ENCODE measurements at regions of chr6 and their contacts with region 1.

Region 1: GRCh38 chr6:134640975-134641429 is 308.9 kb downstream of the ALDH8A1 start:
- DNase-seq: peak; percentile 73 to 78 (median 75)
- H3K4me3 ChIP-seq: no peak overlapping the region
- H3K4me3 Mint-ChIP-seq: no peak overlapping the region
- H3K27ac ChIP-seq: no peak overlapping the region
- H3K27ac Mint-ChIP-seq: no peak overlapping the region
- H3K4me1 ChIP-seq: peaks cover 7% of the 10 kb centered on the region
- H3K4me1 Mint-ChIP-seq: peaks cover 10 to 20% (median 15%) of the 10 kb centered on the region in 4 donors
- H3K27me3 ChIP-seq: no peaks in the 10 kb centered on the region
- H3K27me3 Mint-ChIP-seq: no peaks in the 10 kb centered on the region

Region 2: DNA sequence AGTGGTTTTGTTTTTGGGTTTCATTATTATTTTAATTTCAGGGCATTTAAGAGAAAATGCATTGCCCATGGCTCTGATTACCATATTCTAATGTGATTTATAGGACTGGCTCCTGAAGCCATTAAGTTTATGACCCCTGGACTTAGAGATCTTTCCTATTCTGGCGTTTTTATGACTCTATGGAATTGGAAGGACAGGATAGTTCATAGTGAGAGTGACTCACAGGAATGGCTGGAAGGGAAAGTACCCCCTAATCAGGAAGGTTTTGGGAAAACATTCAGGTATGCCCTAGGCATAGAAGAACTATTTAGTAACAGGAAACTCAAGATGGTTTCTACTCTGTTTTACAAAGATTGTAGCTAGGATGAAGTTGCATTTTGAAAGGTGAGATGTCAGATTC is 480.0 kb before region 1 on chr6:
- CTCF ChIA-PET with region 1: interaction called, 27 read pairs
- POLR2A ChIA-PET with region 1: no interaction called
- intact Hi-C with region 1: no loop called
- DNase-seq: no peak
- H3K4me3 ChIP-seq: no peak overlapping the region
- H3K4me3 Mint-ChIP-seq: no peak overlapping the region
- H3K27ac ChIP-seq: no peak overlapping the region
- H3K27ac Mint-ChIP-seq: no peak overlapping the region
- H3K4me1 ChIP-seq: no peaks in the 10 kb centered on the region
- H3K4me1 Mint-ChIP-seq: no peaks in the 10 kb centered on the region
- H3K27me3 ChIP-seq: no peaks in the 10 kb centered on the region
- H3K27me3 Mint-ChIP-seq: no peaks in the 10 kb centered on the region

Region 3: DNA sequence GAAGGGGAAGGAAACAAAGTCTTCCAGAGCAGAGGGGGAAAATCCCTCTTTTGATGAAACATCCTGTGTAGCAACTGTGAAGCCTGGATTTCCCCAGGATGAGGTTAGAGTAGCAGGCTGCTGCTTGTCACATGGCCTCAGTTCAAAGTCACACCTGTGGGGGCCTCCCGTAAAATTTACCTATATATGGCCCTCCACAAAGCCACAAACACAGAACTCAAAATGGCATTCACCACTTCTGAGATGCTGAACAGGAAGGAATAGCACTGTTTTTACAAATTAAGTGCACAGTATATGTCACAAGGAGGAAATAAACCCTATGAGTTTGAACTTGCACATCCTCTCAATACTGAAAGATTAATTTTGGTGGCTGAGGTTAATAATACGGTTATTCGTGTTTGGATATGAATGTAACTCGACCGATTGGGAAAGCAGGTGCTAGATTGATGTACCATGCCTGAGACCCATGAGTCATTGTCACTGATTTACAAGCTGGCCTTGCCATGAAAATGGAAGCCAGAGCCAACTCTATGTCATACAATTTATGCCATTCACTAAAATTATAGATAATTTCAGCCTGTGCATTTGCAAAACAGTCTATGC is 393.7 kb before region 1 on chr6:
- CTCF ChIA-PET with region 1: interaction called, 6 read pairs
- POLR2A ChIA-PET with region 1: no interaction called
- intact Hi-C with region 1: loop called (anchors 1 kb)
- DNase-seq: peak; percentile 85 to 95 (median 92)
- H3K4me3 ChIP-seq: peak overlapping the region in 1 of 2 donors; percentile 5
- H3K4me3 Mint-ChIP-seq: peak overlapping the region; percentile 60 to 82 (median 76)
- H3K27ac ChIP-seq: peak overlapping the region; percentile 60
- H3K27ac Mint-ChIP-seq: peak overlapping the region; percentile 90 to 99 (median 98)
- H3K4me1 ChIP-seq: peaks cover 63% of the 10 kb centered on the region
- H3K4me1 Mint-ChIP-seq: peaks cover 43 to 65% (median 54%) of the 10 kb centered on the region in 4 donors
- H3K27me3 ChIP-seq: no peaks in the 10 kb centered on the region
- H3K27me3 Mint-ChIP-seq: no peaks in the 10 kb centered on the region

Region 4: GRCh38 chr6:134619789-134620188 is 21.2 kb before region 1 on chr6:
- CTCF ChIA-PET with region 1: interaction called, 26 read pairs
- POLR2A ChIA-PET with region 1: interaction called, 4 read pairs
- intact Hi-C with region 1: no loop called
- DNase-seq: no peak
- H3K4me3 ChIP-seq: no peak overlapping the region
- H3K4me3 Mint-ChIP-seq: no peak overlapping the region
- H3K27ac ChIP-seq: no peak overlapping the region
- H3K27ac Mint-ChIP-seq: peak overlapping the region in 1 of 7 donors; percentile 19
- H3K4me1 ChIP-seq: no peaks in the 10 kb centered on the region
- H3K4me1 Mint-ChIP-seq: peaks cover 3 to 7% (median 5%) of the 10 kb centered on the region in 4 donors
- H3K27me3 ChIP-seq: no peaks in the 10 kb centered on the region
- H3K27me3 Mint-ChIP-seq: peaks cover 0 to 3% of the 10 kb centered on the region in 2 donors

Region 5: DNA sequence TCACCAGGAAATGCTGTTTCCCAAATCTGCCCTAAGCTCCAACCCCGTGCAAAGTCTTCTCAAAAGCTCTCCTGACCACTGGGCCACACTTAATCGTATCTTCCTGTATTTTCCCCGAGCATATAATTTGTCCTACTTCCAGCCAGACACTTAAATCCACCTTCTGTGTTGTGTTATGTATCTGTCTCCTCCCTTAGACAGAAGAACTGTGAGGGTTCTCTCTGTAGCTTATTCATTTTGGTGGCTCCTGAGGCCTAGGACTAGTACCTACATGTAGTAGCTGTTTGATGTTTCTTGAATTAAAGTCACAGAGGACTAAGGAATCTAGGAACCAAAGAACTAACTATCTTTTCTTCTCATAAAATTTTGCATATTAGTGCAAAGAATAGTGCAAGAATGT is 16.3 kb after region 1 on chr6:
- CTCF ChIA-PET with region 1: interaction called, 10 read pairs
- POLR2A ChIA-PET with region 1: no interaction called
- intact Hi-C with region 1: no loop called
- DNase-seq: no peak
- H3K4me3 ChIP-seq: no peak overlapping the region
- H3K4me3 Mint-ChIP-seq: no peak overlapping the region
- H3K27ac ChIP-seq: no peak overlapping the region
- H3K27ac Mint-ChIP-seq: no peak overlapping the region
- H3K4me1 ChIP-seq: no peaks in the 10 kb centered on the region
- H3K4me1 Mint-ChIP-seq: no peaks in the 10 kb centered on the region
- H3K27me3 ChIP-seq: no peaks in the 10 kb centered on the region
- H3K27me3 Mint-ChIP-seq: peaks cover 0 to 5% of the 10 kb centered on the region in 2 donors

Region 6: GRCh38 chr6:134882426-134883038 is 241.5 kb after region 1 on chr6:
- CTCF ChIA-PET with region 1: interaction called, 8 read pairs
- POLR2A ChIA-PET with region 1: no interaction called
- intact Hi-C with region 1: loop called (anchors 1 kb)
- DNase-seq: peak; percentile 22 to 49 (median 45)
- H3K4me3 ChIP-seq: no peak overlapping the region
- H3K4me3 Mint-ChIP-seq: no peak overlapping the region
- H3K27ac ChIP-seq: no peak overlapping the region
- H3K27ac Mint-ChIP-seq: no peak overlapping the region
- H3K4me1 ChIP-seq: no peaks in the 10 kb centered on the region
- H3K4me1 Mint-ChIP-seq: no peaks in the 10 kb centered on the region
- H3K27me3 ChIP-seq: no peaks in the 10 kb centered on the region
- H3K27me3 Mint-ChIP-seq: peaks cover 14 to 18% of the 10 kb centered on the region in 2 donors

Region 7: DNA sequence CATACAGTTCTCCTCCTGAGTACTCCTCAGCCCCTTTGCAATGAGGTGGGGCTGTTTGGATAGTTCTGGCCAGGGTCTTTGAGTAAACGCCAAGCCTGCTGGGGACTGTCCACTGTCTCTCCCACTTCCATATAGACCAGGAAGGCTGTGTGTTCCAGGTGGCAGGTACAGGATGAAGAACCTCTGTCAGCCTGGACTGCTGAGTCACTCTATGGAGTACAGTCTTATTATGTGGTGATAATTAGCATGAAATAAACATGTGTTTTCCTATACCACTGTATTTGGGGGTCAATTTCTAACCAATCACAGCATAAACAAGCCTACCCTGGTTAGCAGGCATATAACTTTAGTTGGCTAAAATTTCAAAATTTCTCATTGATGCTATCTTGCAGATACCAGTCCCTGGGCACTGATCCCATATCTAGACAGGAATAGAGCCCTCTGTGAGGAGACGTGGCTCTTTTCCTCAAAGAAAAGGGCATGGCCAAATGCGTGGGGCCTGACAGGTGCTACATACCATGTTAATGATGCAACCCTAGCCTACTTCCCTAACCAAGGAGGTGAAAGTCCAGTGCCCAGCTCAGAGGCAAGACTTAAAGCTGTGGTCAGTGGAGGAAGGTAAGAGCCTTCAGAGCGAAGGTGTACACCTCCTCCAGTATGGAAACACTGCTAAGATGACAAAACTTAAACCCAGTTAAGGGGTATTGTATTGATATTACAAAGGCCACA is 313.4 kb after region 1 on chr6:
- CTCF ChIA-PET with region 1: no interaction called
- POLR2A ChIA-PET with region 1: no interaction called
- intact Hi-C with region 1: no loop called
- DNase-seq: no peak
- H3K4me3 ChIP-seq: no peak overlapping the region
- H3K4me3 Mint-ChIP-seq: no peak overlapping the region
- H3K27ac ChIP-seq: no peak overlapping the region
- H3K27ac Mint-ChIP-seq: no peak overlapping the region
- H3K4me1 ChIP-seq: no peaks in the 10 kb centered on the region
- H3K4me1 Mint-ChIP-seq: no peaks in the 10 kb centered on the region
- H3K27me3 ChIP-seq: no peaks in the 10 kb centered on the region
- H3K27me3 Mint-ChIP-seq: no peaks in the 10 kb centered on the region